ENCODE measurements at regions of chr15 and their contacts with region 1.

Region 1: GRCh38 chr15:66619151-66619903 is 53.5 kb upstream of the LCTL start:
- DNase-seq: peak; percentile 85
- ATAC-seq: peak; percentile 67
- H3K4me3 Mint-ChIP-seq: no peak overlapping the region
- H3K27ac Mint-ChIP-seq: no peak overlapping the region; the same call in 1 of the 2 replicates
- H3K4me1 Mint-ChIP-seq: peaks cover 64% of the 10 kb centered on the region
- H3K27me3 Mint-ChIP-seq: peaks cover 5% of the 10 kb centered on the region
- CTCF ChIP-seq: peak; percentile 73

Region 2: DNA sequence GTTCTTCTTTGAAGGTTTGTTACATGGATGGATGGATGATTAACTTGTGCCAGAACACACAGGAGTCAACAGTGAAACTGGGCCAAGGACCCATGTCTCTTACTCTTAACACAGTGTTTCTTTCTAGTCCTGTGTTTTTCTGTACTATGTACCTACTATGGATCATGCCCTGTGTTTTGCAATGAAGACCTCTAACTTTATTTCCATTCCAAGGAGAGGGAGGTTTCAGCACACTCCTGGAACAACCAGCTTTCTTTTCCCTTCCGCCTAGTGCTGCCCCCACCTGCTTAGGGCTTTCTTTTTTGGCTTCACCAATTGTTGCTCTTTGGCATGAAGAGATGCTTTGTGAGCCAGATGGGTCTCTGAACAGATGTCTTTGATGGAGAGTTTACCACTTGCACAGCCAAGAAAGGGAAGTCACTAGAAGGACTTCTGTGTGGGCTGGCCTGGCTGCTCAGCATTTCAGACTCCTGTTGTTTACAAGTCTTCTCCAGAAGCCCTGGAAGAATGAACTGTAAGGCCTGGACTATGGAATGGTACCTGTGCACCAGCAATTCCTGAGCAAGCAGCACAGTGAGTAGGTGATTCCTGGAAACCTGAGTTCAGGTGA is 166.3 kb before region 1 on chr15:
- CTCF ChIA-PET with region 1: no interaction called
- POLR2A ChIA-PET with region 1: no interaction called
- DNase-seq: no peak
- ATAC-seq: no peak
- H3K4me3 Mint-ChIP-seq: no peak overlapping the region
- H3K27ac Mint-ChIP-seq: no peak overlapping the region
- H3K4me1 Mint-ChIP-seq: peaks cover 11% of the 10 kb centered on the region
- H3K27me3 Mint-ChIP-seq: no peaks in the 10 kb centered on the region
- CTCF ChIP-seq: no peak

Region 3: GRCh38 chr15:66545249-66545648 is 74.1 kb before region 1 on chr15:
- CTCF ChIA-PET with region 1: no interaction called
- POLR2A ChIA-PET with region 1: no interaction called
- DNase-seq: no peak
- ATAC-seq: no peak
- H3K4me3 Mint-ChIP-seq: no peak overlapping the region
- H3K27ac Mint-ChIP-seq: no peak overlapping the region
- H3K4me1 Mint-ChIP-seq: no peaks in the 10 kb centered on the region
- H3K27me3 Mint-ChIP-seq: no peaks in the 10 kb centered on the region
- CTCF ChIP-seq: no peak

Region 4: GRCh38 chr15:66630801-66631351 is 11.5 kb after region 1 on chr15:
- CTCF ChIA-PET with region 1: interaction called, 18 read pairs
- POLR2A ChIA-PET with region 1: no interaction called
- DNase-seq: no peak
- ATAC-seq: no peak
- H3K4me3 Mint-ChIP-seq: no peak overlapping the region
- H3K27ac Mint-ChIP-seq: no peak overlapping the region
- H3K4me1 Mint-ChIP-seq: peaks cover 71% of the 10 kb centered on the region
- H3K27me3 Mint-ChIP-seq: no peaks in the 10 kb centered on the region
- CTCF ChIP-seq: no peak

Region 5: GRCh38 chr15:66650434-66650833 is 31.1 kb after region 1 on chr15:
- CTCF ChIA-PET with region 1: interaction called, 24 read pairs
- POLR2A ChIA-PET with region 1: no interaction called
- DNase-seq: no peak
- ATAC-seq: no peak
- H3K4me3 Mint-ChIP-seq: no peak overlapping the region
- H3K27ac Mint-ChIP-seq: no peak overlapping the region
- H3K4me1 Mint-ChIP-seq: peaks cover 30% of the 10 kb centered on the region
- H3K27me3 Mint-ChIP-seq: peaks cover 3% of the 10 kb centered on the region; the same call in 1 of the 2 replicates
- CTCF ChIP-seq: no peak

Region 6: DNA sequence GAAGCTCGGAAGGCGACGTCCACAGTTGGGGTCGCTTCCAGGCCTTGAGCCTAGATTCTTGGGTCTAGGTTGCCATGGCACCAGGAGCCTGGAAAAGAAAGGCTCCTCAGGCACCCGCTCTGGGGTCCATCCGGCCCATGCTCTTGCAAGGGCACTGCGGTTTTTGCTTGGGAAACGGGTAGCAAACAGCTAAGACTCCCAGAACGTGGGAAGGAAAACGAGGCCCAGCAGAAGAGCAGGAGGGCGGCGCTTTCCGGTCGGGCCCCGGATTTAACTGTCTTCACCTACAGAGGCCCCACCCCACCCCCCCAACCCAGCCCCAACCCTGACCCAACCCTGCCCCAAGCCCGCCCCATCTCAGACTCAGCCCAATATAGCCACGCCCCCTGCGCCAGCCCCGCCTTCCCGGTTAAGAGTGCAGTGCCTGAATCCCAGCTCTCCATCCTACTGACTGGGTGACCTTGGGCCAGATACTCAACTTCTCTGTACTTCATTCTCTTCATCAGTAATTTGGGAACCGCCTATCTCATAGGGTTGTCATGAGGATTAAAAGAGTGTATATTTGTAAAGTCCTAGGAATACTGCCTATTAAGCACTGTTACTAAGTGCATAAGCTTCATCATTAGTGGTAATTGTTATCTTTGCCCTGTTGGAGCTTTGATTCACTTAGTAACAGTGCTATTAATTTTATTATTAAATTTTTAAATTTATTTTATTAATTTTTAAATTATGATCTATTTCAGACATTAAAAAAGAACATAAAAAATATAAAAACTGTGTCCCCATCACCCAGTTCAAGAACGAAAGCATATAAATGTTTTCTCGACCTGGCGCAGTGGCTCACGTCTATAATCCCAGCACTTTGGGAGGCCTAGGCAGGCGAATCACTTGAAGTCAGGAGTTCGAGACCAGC is 54.3 kb after region 1 on chr15:
- CTCF ChIA-PET with region 1: interaction called, 13 read pairs
- POLR2A ChIA-PET with region 1: interaction called, 3 read pairs
- DNase-seq: peak; percentile 95
- ATAC-seq: peak; percentile 82
- H3K4me3 Mint-ChIP-seq: no peak overlapping the region
- H3K27ac Mint-ChIP-seq: no peak overlapping the region
- H3K4me1 Mint-ChIP-seq: peaks cover 29% of the 10 kb centered on the region
- H3K27me3 Mint-ChIP-seq: peaks cover 11% of the 10 kb centered on the region
- CTCF ChIP-seq: no peak

Region 7: GRCh38 chr15:66774001-66774814 is 154.9 kb after region 1 on chr15:
- CTCF ChIA-PET with region 1: interaction called, 11 read pairs
- POLR2A ChIA-PET with region 1: no interaction called
- DNase-seq: peak; percentile 92
- ATAC-seq: peak; percentile 86
- H3K4me3 Mint-ChIP-seq: no peak overlapping the region
- H3K27ac Mint-ChIP-seq: peak overlapping the region; percentile 83
- H3K4me1 Mint-ChIP-seq: peaks cover 47% of the 10 kb centered on the region
- H3K27me3 Mint-ChIP-seq: no peaks in the 10 kb centered on the region
- CTCF ChIP-seq: peak; percentile 99